ENCODE measurements at regions of chrX and their contacts with region 1.

Region 1: GRCh38 chrX:143648705-143649104 is 12.8 kb upstream of the SLITRK4 start:
- DNase-seq: peak in 1 of 2 donors; percentile 14
- ATAC-seq: peak in 1 of 2 donors; percentile 80
- H3K4me3 ChIP-seq: no peak overlapping the region
- H3K27ac ChIP-seq: no peak overlapping the region
- H3K4me1 ChIP-seq: no peaks in the 10 kb centered on the region
- H3K27me3 ChIP-seq: no peaks in the 10 kb centered on the region
- CTCF ChIP-seq: peak in 1 of 5 experiments; percentile 30
- POLR2A ChIP-seq: no peak

Region 2: GRCh38 chrX:142503967-142504643 is 1144.6 kb before region 1 on chrX:
- in situ Hi-C with region 1: no loop called
- intact Hi-C with region 1: no loop called
- DNase-seq: no peak
- ATAC-seq: no peak
- H3K4me3 ChIP-seq: no peak overlapping the region
- H3K27ac ChIP-seq: no peak overlapping the region
- H3K4me1 ChIP-seq: no peaks in the 10 kb centered on the region
- H3K27me3 ChIP-seq: no peaks in the 10 kb centered on the region
- CTCF ChIP-seq: no peak
- POLR2A ChIP-seq: no peak

Region 3: DNA sequence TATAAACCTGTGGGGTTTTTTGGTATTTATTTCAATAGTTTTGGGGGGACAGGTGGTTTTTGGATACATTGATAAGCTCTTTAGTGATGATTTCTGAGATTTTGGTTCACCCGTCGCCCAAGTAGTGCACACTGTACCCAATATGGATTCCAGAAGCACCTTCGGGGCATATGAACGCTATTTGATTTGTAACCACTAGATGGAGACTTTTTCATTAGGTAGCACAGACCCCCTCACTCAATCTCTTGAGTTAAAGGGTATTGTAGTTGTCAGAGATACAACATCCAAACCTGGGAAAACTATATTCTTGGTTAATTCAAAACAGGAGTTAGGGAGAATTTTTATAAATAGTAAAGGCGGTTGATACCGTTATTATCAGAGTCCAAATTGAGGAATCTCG is 211.3 kb before region 1 on chrX:
- in situ Hi-C with region 1: no loop called
- intact Hi-C with region 1: loop called (anchors 5 kb)
- DNase-seq: no peak
- ATAC-seq: no peak
- H3K4me3 ChIP-seq: no peak overlapping the region
- H3K27ac ChIP-seq: no peak overlapping the region
- H3K4me1 ChIP-seq: no peaks in the 10 kb centered on the region
- H3K27me3 ChIP-seq: no peaks in the 10 kb centered on the region
- CTCF ChIP-seq: peak in 2 of 5 experiments; percentile 32 to 44
- POLR2A ChIP-seq: no peak

Region 4: DNA sequence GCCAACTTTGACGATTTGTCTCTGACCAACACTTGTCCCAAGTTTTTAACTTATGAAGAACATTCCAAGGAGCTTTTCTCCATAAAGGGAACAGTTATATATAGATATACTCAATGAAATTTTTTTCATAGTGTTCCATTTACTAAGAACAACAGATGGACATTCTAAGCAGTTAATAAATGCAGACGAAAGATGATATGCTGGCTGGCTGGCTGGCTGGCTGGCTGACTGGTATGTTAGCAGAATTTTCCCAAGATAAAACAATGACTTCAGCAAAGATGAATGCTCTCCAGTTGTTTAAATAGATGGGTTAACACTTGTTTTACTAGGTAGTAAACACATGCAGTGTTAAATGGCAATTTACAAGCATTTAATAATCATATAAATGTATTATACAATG is 193.7 kb before region 1 on chrX:
- in situ Hi-C with region 1: no loop called
- intact Hi-C with region 1: loop called (anchors 5 kb)
- DNase-seq: peak in 1 of 2 donors; percentile 14
- ATAC-seq: peak; percentile 56 to 76
- H3K4me3 ChIP-seq: no peak overlapping the region
- H3K27ac ChIP-seq: no peak overlapping the region
- H3K4me1 ChIP-seq: peaks cover 0 to 8% of the 10 kb centered on the region in 2 donors
- H3K27me3 ChIP-seq: no peaks in the 10 kb centered on the region
- CTCF ChIP-seq: no peak
- POLR2A ChIP-seq: no peak

Region 5: DNA sequence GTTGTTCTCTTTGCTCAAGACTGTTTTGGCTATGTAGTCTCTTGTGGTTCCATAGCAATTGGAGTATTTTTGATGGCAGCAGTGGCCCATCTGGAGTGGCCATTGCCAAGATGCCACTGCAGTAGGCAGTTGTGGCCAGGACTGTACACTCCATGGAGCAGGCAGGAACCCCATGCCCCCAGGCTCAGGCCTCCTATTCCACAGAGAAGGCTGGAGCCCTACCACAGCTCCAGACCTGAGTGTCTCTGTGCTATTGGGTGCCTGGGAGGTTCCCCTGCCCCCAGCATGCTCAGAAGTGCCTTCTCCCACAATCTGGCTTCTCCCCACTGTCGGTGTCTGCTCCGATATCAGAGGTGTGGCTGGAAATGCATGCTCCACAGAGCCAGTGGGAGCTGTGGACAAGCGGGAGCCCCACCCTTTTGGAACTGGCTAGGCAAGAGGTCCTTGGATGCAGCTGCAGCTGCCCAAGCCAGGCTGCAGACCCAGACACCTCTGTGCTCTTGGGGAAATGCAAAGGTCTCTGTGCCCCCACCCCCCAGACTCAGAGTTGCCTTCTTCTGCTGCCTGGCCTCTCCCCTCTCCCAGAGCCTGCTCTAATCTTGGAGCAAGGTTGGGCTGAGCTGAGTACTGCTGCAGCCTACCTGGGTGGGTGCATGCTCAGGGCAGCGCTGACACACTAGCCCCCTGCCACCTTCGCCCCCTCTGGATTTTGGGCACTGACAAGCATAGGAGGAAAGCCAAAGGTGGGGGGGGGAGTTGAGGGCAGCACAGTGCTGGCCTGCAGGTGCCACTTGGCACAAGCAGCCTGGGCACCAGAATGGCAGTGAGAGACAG is 188.5 kb after region 1 on chrX:
- in situ Hi-C with region 1: no loop called
- intact Hi-C with region 1: no loop called
- DNase-seq: no peak
- ATAC-seq: no peak
- H3K4me3 ChIP-seq: no peak overlapping the region
- H3K27ac ChIP-seq: no peak overlapping the region
- H3K4me1 ChIP-seq: no peaks in the 10 kb centered on the region
- H3K27me3 ChIP-seq: no peaks in the 10 kb centered on the region
- CTCF ChIP-seq: no peak
- POLR2A ChIP-seq: no peak